ENCODE measurements at regions of chr5 and their contacts with region 1.

Region 1: GRCh38 chr5:102536323-102536928 is 37.6 kb upstream of the SLCO6A1 start:
- DNase-seq: peak; percentile 6
- H3K4me3 ChIP-seq: no peak overlapping the region
- H3K27ac ChIP-seq: no peak overlapping the region
- H3K4me1 ChIP-seq: no peaks in the 10 kb centered on the region; a peak in 1 of 4 replicates
- H3K27me3 ChIP-seq: no peaks in the 10 kb centered on the region
- CTCF ChIP-seq: peak; percentile 68
- EP300 ChIP-seq: no peak
- RAD21 ChIP-seq: peak; percentile 74

Region 2: DNA sequence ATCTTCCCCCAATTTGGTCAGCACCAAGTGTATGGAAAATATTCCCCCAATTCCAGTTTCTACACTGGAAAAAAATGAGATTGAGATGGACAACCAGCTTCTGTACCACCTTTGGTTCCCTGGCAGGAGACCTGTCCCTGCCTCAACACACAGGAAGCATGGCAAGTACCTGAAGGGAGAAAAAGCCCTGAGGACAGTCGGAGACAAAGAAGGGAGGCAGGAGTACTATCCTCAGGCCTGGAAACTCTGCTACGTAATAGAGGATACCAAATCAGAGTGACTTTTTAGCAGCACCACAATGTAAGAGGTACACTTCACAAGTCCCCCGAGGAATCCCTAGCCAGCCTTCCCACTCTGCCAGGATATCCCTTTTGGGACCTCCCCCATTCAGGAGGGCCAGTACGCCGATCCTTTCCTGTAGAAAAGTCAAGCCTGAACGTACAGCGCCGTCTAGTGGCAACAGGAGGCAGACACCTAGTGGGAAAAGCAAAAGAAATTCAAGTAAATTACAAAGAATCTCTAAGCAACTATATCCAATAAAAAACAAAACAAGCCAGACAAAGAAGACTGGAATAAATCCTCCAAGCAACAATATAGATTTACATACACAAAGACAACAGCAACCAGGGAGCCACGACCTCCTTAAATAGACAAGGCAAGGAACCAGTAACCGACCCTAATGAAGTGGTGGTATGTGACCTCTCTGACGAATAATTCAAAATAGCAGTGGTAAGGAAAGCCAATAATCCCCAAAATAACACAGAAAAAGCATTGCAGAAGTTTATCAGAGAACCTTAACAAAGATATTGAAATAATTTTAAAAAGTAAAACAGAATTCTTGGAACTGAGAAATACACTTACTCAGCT is 25.7 kb after region 1 on chr5:
- CTCF ChIA-PET with region 1: interaction called, 12 read pairs
- POLR2A ChIA-PET with region 1: no interaction called
- DNase-seq: no peak
- H3K4me3 ChIP-seq: peak overlapping the region in 1 of 2 experiments; percentile 33; a peak in 1 of 4 replicates
- H3K27ac ChIP-seq: no peak overlapping the region
- H3K4me1 ChIP-seq: no peaks in the 10 kb centered on the region
- H3K27me3 ChIP-seq: no peaks in the 10 kb centered on the region
- CTCF ChIP-seq: peak; percentile 66
- EP300 ChIP-seq: no peak
- RAD21 ChIP-seq: peak; percentile 51

Region 3: GRCh38 chr5:103041071-103041676 is 504.7 kb after region 1 on chr5:
- CTCF ChIA-PET with region 1: interaction called, 37 read pairs
- POLR2A ChIA-PET with region 1: no interaction called
- DNase-seq: peak; percentile 48
- H3K4me3 ChIP-seq: no peak overlapping the region
- H3K27ac ChIP-seq: no peak overlapping the region
- H3K4me1 ChIP-seq: no peaks in the 10 kb centered on the region
- H3K27me3 ChIP-seq: no peaks in the 10 kb centered on the region
- CTCF ChIP-seq: peak; percentile 66
- EP300 ChIP-seq: no peak
- RAD21 ChIP-seq: peak; percentile 90

Region 4: GRCh38 chr5:103218164-103218563 is 681.7 kb after region 1 on chr5:
- CTCF ChIA-PET with region 1: no interaction called
- POLR2A ChIA-PET with region 1: no interaction called
- DNase-seq: no peak
- H3K4me3 ChIP-seq: no peak overlapping the region
- H3K27ac ChIP-seq: no peak overlapping the region
- H3K4me1 ChIP-seq: no peaks in the 10 kb centered on the region; a peak in 1 of 4 replicates
- H3K27me3 ChIP-seq: no peaks in the 10 kb centered on the region
- CTCF ChIP-seq: no peak
- EP300 ChIP-seq: no peak
- RAD21 ChIP-seq: no peak

Measured in SK-N-SH (cell line).